GM13977 (cell line): ENCODE measurements at regions of chr12 and their contacts with region 1.

Region 1: DNA sequence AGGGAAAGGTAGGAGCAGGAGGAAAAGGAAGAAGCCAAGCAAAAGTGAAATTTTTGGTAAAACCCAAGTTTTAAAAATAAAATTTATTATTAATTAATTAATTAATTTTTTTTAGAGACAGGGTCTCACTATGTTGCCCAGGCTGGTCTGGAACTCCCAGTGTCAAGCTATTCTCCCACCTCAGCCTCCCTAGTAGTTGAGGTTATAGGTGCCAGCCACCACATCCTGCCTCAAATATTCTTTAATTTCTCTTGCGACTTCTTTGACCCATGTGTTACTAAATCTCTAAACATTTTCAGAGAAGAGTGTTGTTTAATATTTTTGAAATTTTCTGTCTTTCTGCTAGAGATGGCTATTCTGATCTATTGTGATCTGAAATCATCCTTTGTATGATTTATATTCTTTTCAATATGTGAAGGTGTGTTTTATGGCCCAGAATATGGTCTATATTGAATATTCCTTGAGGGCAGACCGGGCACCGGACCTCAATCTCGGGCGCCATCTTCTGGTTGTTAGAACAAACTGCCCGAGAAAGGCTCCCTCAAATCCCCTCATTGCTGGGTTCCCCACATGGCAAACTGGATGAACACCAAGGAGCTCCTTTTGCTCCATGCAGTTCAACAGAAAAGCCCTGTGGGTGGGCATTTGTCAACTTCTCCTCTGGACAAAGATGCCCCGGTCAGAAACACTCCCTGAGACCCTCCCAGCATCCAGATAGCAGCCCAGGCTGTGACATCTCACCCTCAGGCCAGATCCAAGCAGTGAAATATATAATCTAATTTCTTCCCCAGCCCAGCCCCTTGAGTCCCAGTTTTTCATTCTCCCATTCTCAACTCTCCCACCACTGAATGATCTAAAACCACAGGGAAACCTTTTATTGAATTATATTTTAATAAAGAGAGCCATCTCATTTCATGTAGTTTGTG is 110.5 kb downstream of the ASCL4 start:
- DNase-seq: peak; percentile 64
- CTCF ChIP-seq: peak; percentile 84

Region 2: GRCh38 chr12:107685360-107686248 is 199.4 kb before region 1 on chr12 and contains the start of gene PWP1:
- in situ Hi-C with region 1: loop called (anchors 10 kb)
- DNase-seq: peak; percentile 94
- CTCF ChIP-seq: no peak

Region 3: DNA sequence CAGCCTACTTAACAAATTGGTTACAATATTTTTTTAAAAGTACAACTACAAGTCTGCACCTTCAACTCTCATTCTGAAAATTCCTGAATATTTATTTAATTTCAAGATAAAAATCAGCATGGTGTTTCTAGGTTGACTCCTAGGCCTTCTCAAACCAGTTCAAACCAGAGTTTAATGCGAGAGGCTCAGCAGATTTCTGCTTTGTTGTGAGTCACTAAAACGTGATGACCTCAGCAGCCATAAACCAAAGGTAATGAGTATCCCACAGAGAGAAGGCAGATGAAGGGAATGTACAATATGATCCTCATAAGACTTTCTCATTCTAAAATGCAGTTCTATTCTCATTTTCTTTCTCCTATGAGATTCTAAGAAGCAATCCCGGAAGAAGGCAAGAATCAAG is 125.6 kb before region 1 on chr12:
- in situ Hi-C with region 1: loop called (anchors 5 kb)
- DNase-seq: no peak
- CTCF ChIP-seq: no peak